ENCODE measurements at regions of chr9 and their contacts with region 1.

Region 1: GRCh38 chr9:96376891-96377874 is 6.3 kb downstream of the SLC35D2 start:
- H3K4me3 ChIP-seq: no peak overlapping the region
- H3K27ac ChIP-seq: peak overlapping the region; percentile 56
- H3K4me1 ChIP-seq: peaks cover 4% of the 10 kb centered on the region; the same call in 1 of the 2 replicates
- CTCF ChIP-seq: no peak

Region 2: DNA sequence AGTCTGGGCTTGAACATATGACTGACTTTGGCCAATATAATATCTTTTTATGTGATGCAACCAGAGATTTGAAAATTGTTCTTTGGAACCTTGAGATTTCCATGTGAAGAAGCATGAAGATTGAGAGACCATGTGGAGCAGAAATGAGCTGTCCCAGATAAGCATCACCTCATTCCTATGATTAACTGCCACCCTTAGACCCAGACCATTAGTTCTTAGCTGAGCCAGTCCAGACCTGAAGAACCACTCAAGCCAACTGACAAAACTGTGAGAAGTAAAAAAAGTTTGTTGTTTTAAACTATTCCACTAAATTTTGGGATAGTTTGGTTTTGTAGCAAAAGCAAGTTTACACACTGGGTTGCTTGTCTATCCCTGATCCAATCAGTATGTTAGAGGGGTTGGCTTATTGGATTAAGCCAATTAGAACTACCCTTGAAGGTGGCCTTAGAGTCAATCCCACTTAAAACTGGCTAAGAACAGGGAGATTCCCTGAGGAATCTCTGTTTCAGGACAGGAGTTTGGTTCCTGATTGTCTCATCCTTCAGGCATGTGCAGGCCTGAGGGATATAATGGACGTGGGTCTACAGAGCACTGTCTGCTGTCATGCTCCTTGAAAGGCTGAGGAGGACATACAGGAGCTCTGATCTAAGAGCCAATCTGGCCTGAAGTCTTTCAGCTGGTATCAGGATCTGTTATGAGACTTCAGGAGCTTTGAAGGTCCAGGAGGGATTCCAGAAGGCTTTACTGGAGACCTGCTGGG is 314.0 kb after region 1 on chr9:
- CTCF ChIA-PET with region 1: interaction called, 10 read pairs
- POLR2A ChIA-PET with region 1: no interaction called
- H3K4me3 ChIP-seq: no peak overlapping the region
- H3K27ac ChIP-seq: no peak overlapping the region
- H3K4me1 ChIP-seq: no peaks in the 10 kb centered on the region
- CTCF ChIP-seq: no peak

Measured in HEK293 (cell line).